Aorta (tissue), 5 donors: ENCODE measurements at regions of chr10 and their contacts with region 1.

Region 1: GRCh38 chr10:125000366-125001312 is 58.7 kb downstream of the ZRANB1 start:
- DNase-seq: peak; percentile 52 to 76
- ATAC-seq: peak; percentile 22
- H3K4me3 ChIP-seq: no peak overlapping the region
- H3K27ac ChIP-seq: peak overlapping the region; percentile 3 to 89
- H3K4me1 ChIP-seq: no peaks in the 10 kb centered on the region
- H3K27me3 ChIP-seq: no peaks in the 10 kb centered on the region

Region 2: DNA sequence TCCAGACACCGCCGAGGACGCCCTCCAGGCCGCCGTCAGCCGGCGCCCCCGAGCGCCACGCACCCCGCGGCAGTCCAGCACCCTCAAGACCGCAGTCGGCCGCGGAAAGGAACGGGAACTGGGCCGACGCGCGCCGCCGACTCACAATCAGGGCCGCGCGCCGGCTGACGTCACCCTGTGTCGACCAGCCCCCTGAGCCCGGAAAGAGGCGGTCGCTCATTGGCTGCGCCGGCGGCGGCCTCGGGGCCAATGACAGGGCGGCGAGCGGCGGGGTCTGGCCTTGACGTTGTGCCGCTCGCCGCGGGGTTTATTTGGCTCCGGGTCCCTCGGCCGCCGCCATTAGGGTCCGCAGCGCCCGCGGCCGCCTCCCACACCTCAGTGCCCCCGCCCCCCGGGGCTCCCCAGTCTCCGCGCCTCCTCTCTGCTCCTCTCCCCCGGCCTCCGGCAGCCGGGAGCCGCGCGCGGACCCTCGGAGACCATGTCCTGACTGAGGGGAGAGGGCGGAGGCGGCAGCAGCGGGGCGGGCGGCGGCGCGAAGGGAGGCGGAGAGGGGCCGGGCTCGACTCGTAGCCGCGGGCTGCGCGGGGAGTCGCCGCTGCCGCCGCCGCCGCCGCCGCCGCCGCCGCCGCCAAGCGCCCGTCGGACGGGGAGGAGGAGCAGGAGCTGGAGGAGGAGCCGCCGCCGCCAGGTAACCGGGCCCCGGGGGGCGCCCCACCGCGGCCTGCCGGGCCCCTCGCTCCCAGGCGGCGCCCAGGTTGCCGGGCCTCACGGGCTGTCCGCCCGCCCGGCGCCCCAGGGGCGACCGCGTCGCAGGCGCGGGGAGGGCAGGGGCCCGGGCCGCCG is 83.8 kb before region 1 on chr10:
- intact Hi-C with region 1: loop called in 1 of 2 experiments (anchors 2 kb)
- DNase-seq: peak; percentile 99 to 100
- ATAC-seq: peak; percentile 99
- H3K4me3 ChIP-seq: peak overlapping the region; percentile 92 to 94
- H3K27ac ChIP-seq: peak overlapping the region; percentile 90 to 99
- H3K4me1 ChIP-seq: peaks cover 2 to 7% of the 10 kb centered on the region in 2 donors
- H3K27me3 ChIP-seq: no peaks in the 10 kb centered on the region

Region 3: GRCh38 chr10:125048101-125048864 is 47.6 kb after region 1 on chr10:
- intact Hi-C with region 1: loop called in 1 of 2 experiments (anchors 5 kb)
- DNase-seq: peak; percentile 91 to 95
- ATAC-seq: peak; percentile 92
- H3K4me3 ChIP-seq: no peak overlapping the region
- H3K27ac ChIP-seq: no peak overlapping the region
- H3K4me1 ChIP-seq: no peaks in the 10 kb centered on the region
- H3K27me3 ChIP-seq: no peaks in the 10 kb centered on the region

Region 4: GRCh38 chr10:125060826-125061556 is 60.4 kb after region 1 on chr10:
- intact Hi-C with region 1: loop called (anchors 2 to 5 kb)
- DNase-seq: peak; percentile 94 to 95
- ATAC-seq: peak; percentile 82
- H3K4me3 ChIP-seq: no peak overlapping the region
- H3K27ac ChIP-seq: peak overlapping the region; percentile 78 to 97
- H3K4me1 ChIP-seq: peaks cover 5 to 6% of the 10 kb centered on the region in 2 donors
- H3K27me3 ChIP-seq: no peaks in the 10 kb centered on the region

Region 5: DNA sequence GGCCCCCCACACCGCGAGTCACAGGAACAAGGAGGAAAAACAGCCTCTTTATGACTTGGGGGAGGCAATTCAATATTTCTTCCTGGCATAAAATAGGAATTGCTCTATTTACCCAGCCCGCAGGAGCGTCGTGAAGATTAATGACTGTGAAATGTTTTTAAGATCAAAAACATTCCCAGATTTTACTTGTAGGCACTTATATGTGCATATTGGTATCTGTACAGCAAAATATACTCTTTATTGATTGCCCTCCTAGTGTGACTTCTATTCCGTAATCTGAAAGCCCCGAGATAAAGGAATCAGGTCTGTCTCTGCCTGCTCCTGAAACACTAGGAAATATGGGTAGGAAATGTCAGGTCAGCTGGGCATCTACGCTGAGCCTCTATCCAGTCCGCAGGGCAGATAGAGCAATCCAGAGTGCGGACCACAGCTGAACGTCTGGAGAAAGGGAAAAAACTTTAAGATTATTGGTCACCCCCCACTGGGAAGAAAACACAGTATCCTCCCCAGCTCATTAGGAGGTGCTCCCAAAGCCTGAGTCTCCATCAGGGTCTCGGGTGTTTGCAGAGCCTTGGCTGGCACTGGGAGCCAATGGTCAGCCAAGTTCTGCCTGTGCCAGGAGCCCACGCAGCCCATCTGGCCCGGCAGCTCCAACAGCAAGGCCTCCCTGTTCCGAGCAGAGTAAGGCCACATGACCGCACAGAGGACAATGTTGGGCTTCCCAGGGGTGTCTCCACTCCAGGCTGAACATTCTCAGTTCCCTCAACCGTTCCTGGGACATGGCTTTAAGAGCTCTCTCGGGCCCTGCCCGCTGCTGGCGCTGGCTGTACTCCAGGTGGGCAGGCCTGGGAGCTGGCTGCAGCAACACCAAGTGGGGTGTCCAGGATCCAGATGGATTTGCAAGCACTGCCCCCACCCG is 152.1 kb after region 1 on chr10:
- intact Hi-C with region 1: loop called (anchors 5 kb)
- DNase-seq: peak; percentile 67 to 82
- ATAC-seq: peak; percentile 70
- H3K4me3 ChIP-seq: no peak overlapping the region
- H3K27ac ChIP-seq: peak overlapping the region; percentile 33 to 41
- H3K4me1 ChIP-seq: peaks cover 0 to 18% of the 10 kb centered on the region in 2 donors
- H3K27me3 ChIP-seq: no peaks in the 10 kb centered on the region

Region 6: GRCh38 chr10:125160856-125161706 is 160.4 kb after region 1 on chr10:
- intact Hi-C with region 1: loop called in 1 of 2 experiments (anchors 5 kb)
- DNase-seq: peak; percentile 84 to 91
- ATAC-seq: peak; percentile 75
- H3K4me3 ChIP-seq: peak overlapping the region; percentile 83 to 99
- H3K27ac ChIP-seq: peak overlapping the region; percentile 51 to 95
- H3K4me1 ChIP-seq: peaks cover 0 to 9% of the 10 kb centered on the region in 2 donors
- H3K27me3 ChIP-seq: no peaks in the 10 kb centered on the region